ENCODE measurements at regions of chr19 and their contacts with region 1.

Region 1: GRCh38 chr19:42529248-42529764 is 1.0 kb upstream of the CEACAM1 start:
- DNase-seq: peak; percentile 49 to 89
- H3K4me3 ChIP-seq: no peak overlapping the region
- H3K27ac ChIP-seq: no peak overlapping the region
- H3K4me1 ChIP-seq: peaks cover 0 to 11% (median 7%) of the 10 kb centered on the region in 4 experiments; a peak in 5 of 7 replicates
- H3K27me3 ChIP-seq: no peaks in the 10 kb centered on the region
- CTCF ChIP-seq: peak; percentile 85 to 97 (median 96)
- EP300 ChIP-seq: no peak
- POLR2A ChIP-seq: no peak
- RAD21 ChIP-seq: peak; percentile 89 to 91

Region 2: GRCh38 chr19:42396381-42397262 is 132.7 kb before region 1 on chr19:
- CTCF ChIA-PET with region 1: no interaction called
- POLR2A ChIA-PET with region 1: no interaction called
- DNase-seq: peak; percentile 97 to 100
- H3K4me3 ChIP-seq: peak overlapping the region; percentile 81 to 89 (median 86)
- H3K27ac ChIP-seq: peak overlapping the region; percentile 54; the same call in 1 of the 2 replicates
- H3K4me1 ChIP-seq: peaks cover 6 to 10% (median 8%) of the 10 kb centered on the region in 4 experiments; a peak in 6 of 7 replicates
- H3K27me3 ChIP-seq: no peaks in the 10 kb centered on the region; a peak in 1 of 7 replicates
- CTCF ChIP-seq: no peak
- EP300 ChIP-seq: no peak
- POLR2A ChIP-seq: peak; percentile 72 to 82
- RAD21 ChIP-seq: no peak; a peak in 1 of 4 replicates

Region 3: GRCh38 chr19:42440357-42441048 is 88.8 kb before region 1 on chr19:
- CTCF ChIA-PET with region 1: interaction called, 72 read pairs
- POLR2A ChIA-PET with region 1: no interaction called
- DNase-seq: peak in 1 of 2 experiments; percentile 93
- H3K4me3 ChIP-seq: no peak overlapping the region
- H3K27ac ChIP-seq: no peak overlapping the region
- H3K4me1 ChIP-seq: peaks cover 0 to 7% (median 0%) of the 10 kb centered on the region in 4 experiments; a peak in 2 of 7 replicates
- H3K27me3 ChIP-seq: no peaks in the 10 kb centered on the region; a peak in 2 of 7 replicates
- CTCF ChIP-seq: peak; percentile 88 to 89 (median 89)
- EP300 ChIP-seq: no peak
- POLR2A ChIP-seq: no peak
- RAD21 ChIP-seq: peak in 1 of 2 experiments; percentile 47; a peak in 3 of 4 replicates

Region 4: DNA sequence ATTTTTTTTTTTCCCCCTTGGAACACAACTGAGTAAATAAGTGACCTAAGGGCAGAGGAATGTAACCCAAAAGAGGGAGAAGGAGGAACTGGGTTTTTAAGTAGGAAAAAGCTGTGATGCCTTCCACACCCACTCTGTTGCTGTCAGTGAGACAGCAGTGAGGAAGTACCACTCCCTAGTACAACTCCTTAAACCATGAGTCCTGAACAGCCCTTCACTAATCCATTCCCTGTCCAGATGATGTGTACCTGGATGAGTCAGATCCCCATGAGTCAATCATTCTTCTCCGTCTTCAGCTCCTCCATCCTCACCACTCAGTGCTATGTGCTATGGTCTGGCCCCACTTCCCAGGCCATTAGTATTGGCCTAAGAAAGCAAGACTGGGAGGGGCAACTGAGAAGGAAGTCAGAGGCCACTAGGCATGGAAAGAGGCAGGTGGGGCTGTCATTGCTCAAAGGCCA is 73.7 kb before region 1 on chr19:
- CTCF ChIA-PET with region 1: interaction called, 182 read pairs
- POLR2A ChIA-PET with region 1: no interaction called
- DNase-seq: no peak
- H3K4me3 ChIP-seq: no peak overlapping the region
- H3K27ac ChIP-seq: no peak overlapping the region
- H3K4me1 ChIP-seq: peaks cover 0 to 9% (median 5%) of the 10 kb centered on the region in 4 experiments; a peak in 5 of 7 replicates
- H3K27me3 ChIP-seq: no peaks in the 10 kb centered on the region
- CTCF ChIP-seq: no peak
- EP300 ChIP-seq: no peak
- POLR2A ChIP-seq: no peak
- RAD21 ChIP-seq: no peak

Region 5: DNA sequence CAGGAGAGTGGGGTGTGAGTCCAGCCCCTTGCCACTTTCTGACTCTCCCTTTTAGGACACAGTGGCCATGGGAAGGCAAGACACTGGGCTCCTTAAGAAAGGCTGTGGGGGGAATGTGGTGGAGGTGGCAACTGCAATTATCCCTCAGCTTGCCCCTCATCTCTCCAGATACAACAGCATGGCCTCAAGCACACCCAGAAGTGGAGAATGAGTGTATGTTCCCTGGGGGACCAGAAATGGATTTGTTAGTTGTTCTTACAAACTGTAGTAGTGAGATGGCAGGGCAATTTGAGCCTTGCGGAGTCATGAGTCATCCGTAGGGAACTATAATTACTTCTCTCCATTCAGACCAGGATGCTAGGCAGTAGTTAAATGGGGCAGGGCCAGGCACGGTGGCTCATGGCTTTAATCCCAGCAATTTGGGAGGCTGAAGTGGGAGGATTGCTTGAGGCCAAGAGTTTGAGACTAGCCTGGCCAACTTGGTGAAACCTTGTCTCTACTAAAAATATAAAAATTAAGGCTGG is 61.0 kb before region 1 on chr19:
- CTCF ChIA-PET with region 1: interaction called, 30 read pairs
- POLR2A ChIA-PET with region 1: interaction called, 6 read pairs
- DNase-seq: no peak
- H3K4me3 ChIP-seq: no peak overlapping the region
- H3K27ac ChIP-seq: no peak overlapping the region
- H3K4me1 ChIP-seq: peaks cover 11 to 20% (median 15%) of the 10 kb centered on the region in 4 experiments
- H3K27me3 ChIP-seq: no peaks in the 10 kb centered on the region
- CTCF ChIP-seq: no peak
- EP300 ChIP-seq: no peak
- POLR2A ChIP-seq: no peak
- RAD21 ChIP-seq: no peak

Region 6: GRCh38 chr19:42497492-42498168 is 31.7 kb before region 1 on chr19:
- CTCF ChIA-PET with region 1: interaction called, 12 read pairs
- POLR2A ChIA-PET with region 1: no interaction called
- DNase-seq: no peak
- H3K4me3 ChIP-seq: no peak overlapping the region
- H3K27ac ChIP-seq: no peak overlapping the region
- H3K4me1 ChIP-seq: peaks cover 2 to 7% (median 4%) of the 10 kb centered on the region in 4 experiments
- H3K27me3 ChIP-seq: no peaks in the 10 kb centered on the region; a peak in 2 of 7 replicates
- CTCF ChIP-seq: no peak
- EP300 ChIP-seq: no peak
- POLR2A ChIP-seq: no peak
- RAD21 ChIP-seq: no peak

Region 7: GRCh38 chr19:42514449-42514848 is 14.9 kb before region 1 on chr19:
- CTCF ChIA-PET with region 1: interaction called, 33 read pairs
- POLR2A ChIA-PET with region 1: interaction called, 3 read pairs
- DNase-seq: no peak
- H3K4me3 ChIP-seq: no peak overlapping the region
- H3K27ac ChIP-seq: no peak overlapping the region
- H3K4me1 ChIP-seq: no peaks in the 10 kb centered on the region; a peak in 1 of 7 replicates
- H3K27me3 ChIP-seq: no peaks in the 10 kb centered on the region; a peak in 1 of 7 replicates
- CTCF ChIP-seq: no peak
- EP300 ChIP-seq: no peak
- POLR2A ChIP-seq: no peak
- RAD21 ChIP-seq: no peak

Region 8: GRCh38 chr19:42563352-42564210 is 34.3 kb after region 1 on chr19:
- CTCF ChIA-PET with region 1: interaction called, 31 read pairs
- POLR2A ChIA-PET with region 1: no interaction called
- DNase-seq: no peak
- H3K4me3 ChIP-seq: no peak overlapping the region
- H3K27ac ChIP-seq: no peak overlapping the region
- H3K4me1 ChIP-seq: peaks cover 2 to 8% (median 3%) of the 10 kb centered on the region in 4 experiments; a peak in 6 of 7 replicates
- H3K27me3 ChIP-seq: no peaks in the 10 kb centered on the region
- CTCF ChIP-seq: peak in 2 of 3 experiments; percentile 74 to 84; a peak in 3 of 4 replicates
- EP300 ChIP-seq: no peak
- POLR2A ChIP-seq: no peak
- RAD21 ChIP-seq: peak; percentile 72 to 75

Region 9: GRCh38 chr19:42634409-42635232 is 105.3 kb after region 1 on chr19:
- CTCF ChIA-PET with region 1: no interaction called
- POLR2A ChIA-PET with region 1: no interaction called
- DNase-seq: peak in 1 of 2 experiments; percentile 47
- H3K4me3 ChIP-seq: no peak overlapping the region
- H3K27ac ChIP-seq: no peak overlapping the region
- H3K4me1 ChIP-seq: no peaks in the 10 kb centered on the region
- H3K27me3 ChIP-seq: no peaks in the 10 kb centered on the region
- CTCF ChIP-seq: peak; percentile 31 to 49 (median 40)
- EP300 ChIP-seq: no peak
- POLR2A ChIP-seq: no peak
- RAD21 ChIP-seq: peak; percentile 43 to 58